Prostate gland (tissue), 2 donors: ENCODE measurements at regions of chr16 and their contacts with region 1.

Region 1: GRCh38 chr16:69709456-69710084 is 16.8 kb downstream of the NQO1 start:
- DNase-seq: peak; percentile 27
- H3K4me3 ChIP-seq: no peak overlapping the region
- H3K27ac ChIP-seq: peak overlapping the region in 1 of 2 donors; percentile 4
- H3K4me1 ChIP-seq: peaks cover 8% of the 10 kb centered on the region
- H3K27me3 ChIP-seq: no peaks in the 10 kb centered on the region
- CTCF ChIP-seq: peak; percentile 57 to 90 (median 82)
- POLR2A ChIP-seq: no peak

Region 2: GRCh38 chr16:69754469-69755310 is 45.1 kb after region 1 on chr16 and contains the start of gene NOB1:
- intact Hi-C with region 1: loop called (anchors 2 kb)
- DNase-seq: peak; percentile 95
- H3K4me3 ChIP-seq: peak within 1 kb of the TSS; percentile 50 to 78
- H3K27ac ChIP-seq: peak within 1 kb of the TSS; percentile 49 to 60
- H3K4me1 ChIP-seq: no peaks in the 10 kb centered on the region
- H3K27me3 ChIP-seq: no peaks in the 10 kb centered on the region
- CTCF ChIP-seq: peak; percentile 94 to 100 (median 100)
- POLR2A ChIP-seq: peak; percentile 70
- total RNA-seq, gene NOB1: 29.8 to 44.1 TPM